ENCODE measurements at regions of chr16 and their contacts with region 1.

Region 1: DNA sequence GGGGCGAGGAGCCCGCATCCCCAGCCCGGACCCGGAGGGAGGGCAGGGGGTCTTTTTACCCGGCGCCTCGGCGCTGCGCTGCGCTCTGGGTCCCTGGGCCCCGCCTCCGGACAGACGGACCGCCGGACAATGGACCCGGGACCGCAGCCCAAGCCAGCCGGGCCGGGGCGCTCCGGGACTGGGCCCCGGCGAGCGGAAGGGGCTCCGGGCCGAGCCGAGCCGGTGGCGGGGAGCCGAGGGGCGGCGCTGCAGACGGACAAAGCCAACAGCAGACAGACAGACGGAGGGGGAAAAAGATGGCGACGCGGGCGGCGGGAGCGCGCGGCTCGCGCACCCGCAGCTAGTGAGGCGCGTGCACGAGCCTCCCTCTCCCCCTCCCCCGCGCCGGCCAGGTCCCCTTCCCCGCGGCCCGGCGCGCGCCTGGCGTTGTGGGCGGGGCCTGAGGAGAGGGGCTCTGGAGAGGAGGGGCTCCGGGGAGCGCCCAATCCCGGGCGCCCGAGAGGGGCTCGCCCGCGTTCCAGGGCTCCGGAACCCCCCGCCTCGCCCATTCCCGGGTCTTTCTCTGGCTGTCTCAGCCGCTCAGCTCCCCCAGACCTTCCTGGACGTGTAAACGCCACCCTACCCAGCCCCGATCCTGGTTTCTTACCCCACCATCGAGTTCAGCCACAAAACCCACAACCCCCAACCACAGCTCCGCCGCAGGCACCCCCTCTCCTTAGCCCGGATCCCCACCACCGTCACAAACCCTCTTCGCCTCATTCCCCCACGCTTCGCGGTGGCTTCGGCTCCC is at the start of gene ZNF821:
- DNase-seq: peak; percentile 41 to 92 (median 66)
- ATAC-seq: peak; percentile 43
- H3K4me3 ChIP-seq: peak within 1 kb of the TSS; percentile 66
- H3K4me3 Mint-ChIP-seq: peak within 1 kb of the TSS; percentile 100
- H3K27ac ChIP-seq: peak within 1 kb of the TSS; percentile 55 to 89
- H3K27ac Mint-ChIP-seq: peak within 1 kb of the TSS; percentile 95
- H3K4me1 ChIP-seq: peaks cover 43% of the 10 kb centered on the region
- H3K4me1 Mint-ChIP-seq: peaks cover 55% of the 10 kb centered on the region
- H3K27me3 ChIP-seq: no peaks in the 10 kb centered on the region
- H3K27me3 Mint-ChIP-seq: no peaks in the 10 kb centered on the region
- CTCF ChIP-seq: no peak
- total RNA-seq, gene ZNF821: 17.3 to 18.3 TPM

Region 2: DNA sequence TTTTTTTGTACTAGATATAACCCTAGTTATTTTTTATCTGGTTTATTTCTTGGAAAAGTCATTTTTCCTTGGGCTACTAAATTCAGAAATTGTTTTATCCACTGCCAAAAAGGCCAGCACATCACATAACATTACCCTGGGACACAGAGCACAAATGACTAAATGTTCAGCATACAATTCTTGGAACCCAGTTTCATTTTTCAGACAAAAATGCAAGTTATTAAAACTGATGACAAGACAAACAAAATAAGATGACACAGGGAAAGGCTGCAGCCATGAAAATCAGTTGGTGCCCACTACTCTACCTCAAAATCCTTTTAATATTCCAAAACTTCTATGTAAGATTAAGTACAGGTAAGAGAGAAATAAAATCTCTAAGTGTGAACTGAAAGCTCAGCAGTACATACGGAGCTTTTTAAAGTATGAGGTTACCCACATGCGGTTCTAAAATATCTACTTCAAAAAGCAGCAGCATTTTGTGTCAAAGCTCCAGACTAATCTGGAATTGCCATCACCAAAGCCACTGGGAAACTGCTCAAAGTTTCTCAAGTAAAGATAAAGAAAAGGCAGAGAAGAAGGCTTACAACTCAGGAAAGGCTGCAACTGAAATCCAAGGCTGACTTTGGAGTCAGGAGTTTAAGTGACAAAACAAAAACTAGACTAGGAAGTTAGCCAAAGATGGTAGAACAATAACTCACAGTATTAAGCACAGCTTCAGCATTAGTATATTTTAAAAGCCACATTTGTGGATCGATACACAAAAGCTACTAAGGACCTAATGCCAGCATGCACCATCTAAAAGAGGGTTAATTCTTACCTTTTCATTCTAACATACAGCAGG is 116.8 kb before region 1 on chr16:
- CTCF ChIA-PET with region 1: interaction called, 3 read pairs
- POLR2A ChIA-PET with region 1: no interaction called
- intact Hi-C with region 1: loop called in 1 of 2 experiments (anchors 5 kb)
- DNase-seq: no peak
- ATAC-seq: no peak
- H3K4me3 ChIP-seq: no peak overlapping the region
- H3K4me3 Mint-ChIP-seq: no peak overlapping the region
- H3K27ac ChIP-seq: no peak overlapping the region
- H3K27ac Mint-ChIP-seq: peak overlapping the region; percentile 3
- H3K4me1 ChIP-seq: no peaks in the 10 kb centered on the region
- H3K4me1 Mint-ChIP-seq: peaks cover 18% of the 10 kb centered on the region
- H3K27me3 ChIP-seq: no peaks in the 10 kb centered on the region
- H3K27me3 Mint-ChIP-seq: no peaks in the 10 kb centered on the region
- CTCF ChIP-seq: no peak

Region 3: GRCh38 chr16:71845639-71846430 is 38.2 kb before region 1 on chr16 and contains the start of gene ATXN1L:
- CTCF ChIA-PET with region 1: interaction called, 6 read pairs
- POLR2A ChIA-PET with region 1: interaction called, 33 read pairs
- intact Hi-C with region 1: loop called (anchors 1 to 2 kb)
- DNase-seq: peak; percentile 84 to 97 (median 90)
- ATAC-seq: peak; percentile 91
- H3K4me3 ChIP-seq: peak within 1 kb of the TSS; percentile 97
- H3K4me3 Mint-ChIP-seq: peak within 1 kb of the TSS; percentile 96
- H3K27ac ChIP-seq: peak within 1 kb of the TSS; percentile 82 to 91
- H3K27ac Mint-ChIP-seq: peak within 1 kb of the TSS; percentile 99
- H3K4me1 ChIP-seq: peaks cover 18% of the 10 kb centered on the region
- H3K4me1 Mint-ChIP-seq: peaks cover 35% of the 10 kb centered on the region
- H3K27me3 ChIP-seq: no peaks in the 10 kb centered on the region
- H3K27me3 Mint-ChIP-seq: no peaks in the 10 kb centered on the region
- CTCF ChIP-seq: no peak
- total RNA-seq, gene ATXN1L: 61.0 to 61.1 TPM

Region 4: DNA sequence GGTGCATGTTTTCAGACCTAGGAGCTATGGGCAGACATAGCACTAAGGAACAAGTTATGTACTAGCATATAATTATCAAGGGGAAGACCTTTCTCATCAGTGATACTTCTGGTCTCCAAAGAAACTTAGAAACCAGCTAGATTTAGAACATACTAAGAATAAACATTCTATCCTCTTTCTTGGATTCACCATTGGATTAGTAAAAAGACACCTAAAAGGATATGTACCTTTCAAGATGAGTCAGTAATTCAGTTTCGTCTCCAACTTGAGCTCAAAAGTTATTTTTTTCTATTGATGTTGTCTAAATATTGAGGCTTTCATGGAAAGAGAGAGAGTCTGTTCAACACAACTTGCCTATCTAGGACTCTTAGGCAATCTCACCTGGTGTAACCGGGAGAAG is 13.2 kb before region 1 on chr16:
- CTCF ChIA-PET with region 1: interaction called, 14 read pairs
- POLR2A ChIA-PET with region 1: interaction called, 31 read pairs
- intact Hi-C with region 1: no loop called
- DNase-seq: no peak
- ATAC-seq: no peak
- H3K4me3 ChIP-seq: no peak overlapping the region
- H3K4me3 Mint-ChIP-seq: no peak overlapping the region
- H3K27ac ChIP-seq: no peak overlapping the region
- H3K27ac Mint-ChIP-seq: no peak overlapping the region
- H3K4me1 ChIP-seq: peaks cover 14% of the 10 kb centered on the region
- H3K4me1 Mint-ChIP-seq: peaks cover 24% of the 10 kb centered on the region
- H3K27me3 ChIP-seq: no peaks in the 10 kb centered on the region
- H3K27me3 Mint-ChIP-seq: no peaks in the 10 kb centered on the region
- CTCF ChIP-seq: no peak

Region 5: GRCh38 chr16:71903608-71904007 is 19.6 kb after region 1 on chr16:
- CTCF ChIA-PET with region 1: interaction called, 11 read pairs
- POLR2A ChIA-PET with region 1: interaction called, 219 read pairs
- intact Hi-C with region 1: no loop called
- DNase-seq: no peak
- ATAC-seq: no peak
- H3K4me3 ChIP-seq: no peak overlapping the region
- H3K4me3 Mint-ChIP-seq: peak overlapping the region; percentile 1
- H3K27ac ChIP-seq: no peak overlapping the region
- H3K27ac Mint-ChIP-seq: peak overlapping the region; percentile 71
- H3K4me1 ChIP-seq: peaks cover 59% of the 10 kb centered on the region
- H3K4me1 Mint-ChIP-seq: peaks cover 87% of the 10 kb centered on the region
- H3K27me3 ChIP-seq: no peaks in the 10 kb centered on the region
- H3K27me3 Mint-ChIP-seq: no peaks in the 10 kb centered on the region
- CTCF ChIP-seq: no peak

Region 6: DNA sequence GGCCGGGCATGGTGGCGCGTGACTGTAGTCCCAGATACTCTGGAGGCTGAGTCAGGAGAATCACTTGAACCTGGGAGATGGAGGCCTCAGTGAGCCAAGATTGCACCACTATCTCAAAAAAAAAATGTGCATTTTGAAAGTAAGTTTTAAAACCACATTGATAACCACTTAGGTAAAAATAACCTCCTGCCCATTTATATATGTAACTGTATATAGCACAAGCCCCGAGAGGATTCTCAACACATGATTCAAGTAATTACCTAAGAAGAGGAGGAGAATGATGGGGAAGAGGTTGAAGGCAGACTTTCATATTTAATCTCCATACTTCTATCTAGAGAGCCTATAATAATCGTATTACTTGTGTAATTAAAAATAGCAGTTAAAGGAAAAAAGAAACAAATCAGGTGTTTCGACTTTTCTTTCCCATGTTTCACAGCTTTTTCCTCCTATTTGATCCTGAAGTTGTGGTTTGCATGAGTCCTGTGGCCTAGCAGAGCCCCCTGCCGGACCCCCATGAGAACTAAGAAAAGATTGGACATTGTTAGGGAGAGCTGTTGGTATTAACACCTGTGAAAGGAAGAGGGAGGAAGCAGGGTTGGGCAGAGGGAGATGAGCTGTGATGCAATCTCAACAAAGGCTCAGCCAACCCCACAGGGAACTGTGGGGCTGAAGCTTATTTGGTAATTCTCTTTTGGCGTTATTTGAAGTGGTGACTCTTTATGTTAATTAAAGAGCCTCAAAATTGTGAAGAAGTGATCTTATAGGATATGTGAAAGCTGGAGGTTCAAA is 265.8 kb after region 1 on chr16:
- CTCF ChIA-PET with region 1: no interaction called
- POLR2A ChIA-PET with region 1: no interaction called
- intact Hi-C with region 1: no loop called
- DNase-seq: no peak
- ATAC-seq: no peak
- H3K4me3 ChIP-seq: no peak overlapping the region
- H3K4me3 Mint-ChIP-seq: no peak overlapping the region
- H3K27ac ChIP-seq: no peak overlapping the region
- H3K27ac Mint-ChIP-seq: no peak overlapping the region
- H3K4me1 ChIP-seq: no peaks in the 10 kb centered on the region
- H3K4me1 Mint-ChIP-seq: no peaks in the 10 kb centered on the region
- H3K27me3 ChIP-seq: no peaks in the 10 kb centered on the region
- H3K27me3 Mint-ChIP-seq: no peaks in the 10 kb centered on the region
- CTCF ChIP-seq: no peak